PC-9 (cell line): ENCODE measurements at regions of chr2 and their contacts with region 1.

Region 1: GRCh38 chr2:74464406-74464928 is 715 bp downstream of the MOGS start:
- DNase-seq: no peak
- H3K4me3 ChIP-seq: peak overlapping the region; percentile 95
- H3K27ac ChIP-seq: peak overlapping the region; percentile 50; the same call in 1 of the 2 replicates
- H3K4me1 ChIP-seq: peaks cover 15% of the 10 kb centered on the region
- H3K27me3 ChIP-seq: no peaks in the 10 kb centered on the region
- CTCF ChIP-seq: no peak

Region 2: GRCh38 chr2:74421221-74421870 is 43.1 kb before region 1 on chr2 and contains the starts of genes C2orf81 and WDR54:
- CTCF ChIA-PET with region 1: no interaction called
- POLR2A ChIA-PET with region 1: interaction called, 13 read pairs
- intact Hi-C with region 1: no loop called
- DNase-seq: peak; percentile 78 to 93
- H3K4me3 ChIP-seq: peak within 1 kb of the TSS; percentile 67
- H3K27ac ChIP-seq: peak within 1 kb of the TSS; percentile 40
- H3K4me1 ChIP-seq: peaks cover 9% of the 10 kb centered on the region
- H3K27me3 ChIP-seq: no peaks in the 10 kb centered on the region
- CTCF ChIP-seq: no peak
- total RNA-seq, gene C2orf81: 9.8 and 12.0 TPM in 2 replicates
- total RNA-seq, gene WDR54: 46.7 and 53.0 TPM in 2 replicates

Region 3: GRCh38 chr2:74573747-74574562 is 109.5 kb after region 1 on chr2:
- CTCF ChIA-PET with region 1: no interaction called
- POLR2A ChIA-PET with region 1: no interaction called
- intact Hi-C with region 1: no loop called
- DNase-seq: peak in 1 of 2 experiments; percentile 57
- H3K4me3 ChIP-seq: no peak overlapping the region
- H3K27ac ChIP-seq: no peak overlapping the region
- H3K4me1 ChIP-seq: peaks cover 9% of the 10 kb centered on the region; the same call in 1 of the 2 replicates
- H3K27me3 ChIP-seq: no peaks in the 10 kb centered on the region
- CTCF ChIP-seq: no peak